GM12878 (cell line): ENCODE measurements at regions of chr13 and their contacts with region 1.

Region 1: GRCh38 chr13:103188713-103189326 is 122.6 kb upstream of the SLC10A2 start:
- DNase-seq: no peak
- ATAC-seq: peak; percentile 64
- H3K4me3 ChIP-seq: no peak overlapping the region
- H3K27ac ChIP-seq: no peak overlapping the region
- H3K4me1 ChIP-seq: peaks cover 5% of the 10 kb centered on the region
- H3K27me3 ChIP-seq: no peaks in the 10 kb centered on the region
- CTCF ChIP-seq: peak; percentile 34 to 71 (median 53); a peak in 5 of 6 replicates
- EP300 ChIP-seq: no peak
- POLR2A ChIP-seq: no peak
- RAD21 ChIP-seq: peak; percentile 77

Region 2: GRCh38 chr13:103087275-103087674 is 101.5 kb before region 1 on chr13:
- CTCF ChIA-PET with region 1: no interaction called
- POLR2A ChIA-PET with region 1: no interaction called
- RAD21 ChIA-PET with region 1: no interaction called
- SMC1A ChIA-PET with region 1: no interaction called
- in situ Hi-C with region 1: no loop called
- intact Hi-C with region 1: no loop called
- DNase-seq: no peak
- ATAC-seq: no peak
- H3K4me3 ChIP-seq: no peak overlapping the region
- H3K27ac ChIP-seq: no peak overlapping the region
- H3K4me1 ChIP-seq: no peaks in the 10 kb centered on the region
- H3K27me3 ChIP-seq: no peaks in the 10 kb centered on the region
- CTCF ChIP-seq: no peak
- EP300 ChIP-seq: no peak
- POLR2A ChIP-seq: no peak
- RAD21 ChIP-seq: no peak

Region 3: GRCh38 chr13:103236213-103236612 is 47.4 kb after region 1 on chr13:
- CTCF ChIA-PET with region 1: no interaction called
- POLR2A ChIA-PET with region 1: no interaction called
- RAD21 ChIA-PET with region 1: no interaction called
- SMC1A ChIA-PET with region 1: no interaction called
- in situ Hi-C with region 1: no loop called
- intact Hi-C with region 1: no loop called
- DNase-seq: no peak
- ATAC-seq: no peak
- H3K4me3 ChIP-seq: no peak overlapping the region
- H3K27ac ChIP-seq: no peak overlapping the region
- H3K4me1 ChIP-seq: no peaks in the 10 kb centered on the region
- H3K27me3 ChIP-seq: no peaks in the 10 kb centered on the region
- CTCF ChIP-seq: 0 out of 6 replicates have a peak, but pooled peaks of 1 of the 3 experiments have one; percentile 16
- EP300 ChIP-seq: no peak
- POLR2A ChIP-seq: no peak
- RAD21 ChIP-seq: peak; percentile 22; the same call in 1 of the 2 replicates

Region 4: GRCh38 chr13:103324641-103325040 is 135.8 kb after region 1 on chr13:
- CTCF ChIA-PET with region 1: no interaction called
- POLR2A ChIA-PET with region 1: no interaction called
- RAD21 ChIA-PET with region 1: no interaction called
- SMC1A ChIA-PET with region 1: interaction called, 10 read pairs
- in situ Hi-C with region 1: no loop called
- intact Hi-C with region 1: no loop called
- DNase-seq: no peak
- ATAC-seq: no peak
- H3K4me3 ChIP-seq: no peak overlapping the region
- H3K27ac ChIP-seq: no peak overlapping the region
- H3K4me1 ChIP-seq: no peaks in the 10 kb centered on the region
- H3K27me3 ChIP-seq: no peaks in the 10 kb centered on the region
- CTCF ChIP-seq: no peak
- EP300 ChIP-seq: no peak
- POLR2A ChIP-seq: no peak
- RAD21 ChIP-seq: no peak

Region 5: GRCh38 chr13:103371271-103371670 is 182.5 kb after region 1 on chr13:
- CTCF ChIA-PET with region 1: no interaction called
- POLR2A ChIA-PET with region 1: no interaction called
- RAD21 ChIA-PET with region 1: no interaction called
- SMC1A ChIA-PET with region 1: no interaction called
- in situ Hi-C with region 1: no loop called
- intact Hi-C with region 1: no loop called
- DNase-seq: no peak
- ATAC-seq: no peak
- H3K4me3 ChIP-seq: no peak overlapping the region
- H3K27ac ChIP-seq: no peak overlapping the region
- H3K4me1 ChIP-seq: no peaks in the 10 kb centered on the region
- H3K27me3 ChIP-seq: no peaks in the 10 kb centered on the region
- CTCF ChIP-seq: no peak
- EP300 ChIP-seq: no peak
- POLR2A ChIP-seq: no peak
- RAD21 ChIP-seq: no peak

Region 6: GRCh38 chr13:103517066-103517767 is 328.4 kb after region 1 on chr13:
- CTCF ChIA-PET with region 1: no interaction called
- POLR2A ChIA-PET with region 1: no interaction called
- RAD21 ChIA-PET with region 1: no interaction called
- SMC1A ChIA-PET with region 1: interaction called, 4 read pairs
- in situ Hi-C with region 1: no loop called
- intact Hi-C with region 1: loop called (anchors 5 kb)
- DNase-seq: peak; percentile 57
- ATAC-seq: peak; percentile 85
- H3K4me3 ChIP-seq: no peak overlapping the region
- H3K27ac ChIP-seq: no peak overlapping the region
- H3K4me1 ChIP-seq: no peaks in the 10 kb centered on the region
- H3K27me3 ChIP-seq: no peaks in the 10 kb centered on the region
- CTCF ChIP-seq: no peak
- EP300 ChIP-seq: 0 out of 4 replicates have a peak, but pooled peaks of 1 of the 2 experiments have one; percentile 54
- POLR2A ChIP-seq: no peak
- RAD21 ChIP-seq: no peak

Region 7: GRCh38 chr13:103788061-103788652 is 599.3 kb after region 1 on chr13:
- CTCF ChIA-PET with region 1: interaction called, 9 read pairs
- POLR2A ChIA-PET with region 1: no interaction called
- RAD21 ChIA-PET with region 1: no interaction called
- SMC1A ChIA-PET with region 1: interaction called, 7 read pairs
- in situ Hi-C with region 1: no loop called
- intact Hi-C with region 1: loop called (anchors 10 kb)
- DNase-seq: no peak
- ATAC-seq: peak; percentile 34; the same call in 1 of the 3 replicates
- H3K4me3 ChIP-seq: no peak overlapping the region
- H3K27ac ChIP-seq: no peak overlapping the region
- H3K4me1 ChIP-seq: no peaks in the 10 kb centered on the region
- H3K27me3 ChIP-seq: no peaks in the 10 kb centered on the region
- CTCF ChIP-seq: peak in 2 of 3 experiments; percentile 5 to 15; a peak in 2 of 6 replicates
- EP300 ChIP-seq: no peak
- POLR2A ChIP-seq: no peak
- RAD21 ChIP-seq: peak; percentile 20; the same call in 1 of the 2 replicates

Region 8: GRCh38 chr13:104773775-104774174 is 1585.0 kb after region 1 on chr13:
- CTCF ChIA-PET with region 1: interaction called, 3 read pairs
- POLR2A ChIA-PET with region 1: no interaction called
- RAD21 ChIA-PET with region 1: interaction called, 3 read pairs
- SMC1A ChIA-PET with region 1: interaction called, 3 read pairs
- in situ Hi-C with region 1: loop called (anchors 25 kb)
- intact Hi-C with region 1: loop called (anchors 5 kb)
- DNase-seq: peak; percentile 4
- ATAC-seq: peak; percentile 72
- H3K4me3 ChIP-seq: no peak overlapping the region
- H3K27ac ChIP-seq: no peak overlapping the region
- H3K4me1 ChIP-seq: no peaks in the 10 kb centered on the region
- H3K27me3 ChIP-seq: no peaks in the 10 kb centered on the region
- CTCF ChIP-seq: peak; percentile 57 to 70 (median 65); a peak in 5 of 6 replicates
- EP300 ChIP-seq: no peak
- POLR2A ChIP-seq: no peak
- RAD21 ChIP-seq: peak; percentile 85

Region 9: DNA sequence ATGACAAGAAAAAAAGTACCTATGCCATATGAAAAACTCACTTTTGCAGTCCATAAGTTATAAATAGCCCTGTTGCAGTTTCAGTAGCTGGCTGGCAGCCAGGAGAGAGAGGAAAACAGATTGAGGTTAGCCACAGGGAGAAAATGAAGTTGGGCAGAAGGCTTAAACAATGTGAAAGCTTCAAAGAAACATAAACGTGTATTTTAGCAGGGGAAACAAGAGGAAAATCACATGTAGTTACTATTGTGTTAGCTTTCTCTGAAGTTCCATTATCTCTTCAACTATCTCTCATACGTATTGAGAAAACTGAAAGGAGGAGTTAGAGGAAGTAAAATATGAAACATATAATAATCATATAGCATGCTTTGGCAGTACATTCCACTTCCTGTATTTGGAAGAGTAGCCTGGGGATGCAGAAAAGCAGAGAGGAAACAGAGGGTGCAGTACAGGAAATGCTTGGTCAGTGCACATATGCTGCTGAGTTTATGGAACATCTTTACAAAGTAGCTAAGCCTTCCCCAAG is 1795.5 kb after region 1 on chr13:
- CTCF ChIA-PET with region 1: no interaction called
- POLR2A ChIA-PET with region 1: no interaction called
- RAD21 ChIA-PET with region 1: no interaction called
- SMC1A ChIA-PET with region 1: no interaction called
- in situ Hi-C with region 1: no loop called
- intact Hi-C with region 1: loop called (anchors 10 kb)
- DNase-seq: peak; percentile 92
- ATAC-seq: peak; percentile 87
- H3K4me3 ChIP-seq: peak overlapping the region; percentile 15; the same call in 1 of the 2 replicates
- H3K27ac ChIP-seq: peak overlapping the region; percentile 77
- H3K4me1 ChIP-seq: peaks cover 24% of the 10 kb centered on the region
- H3K27me3 ChIP-seq: no peaks in the 10 kb centered on the region
- CTCF ChIP-seq: no peak
- EP300 ChIP-seq: peak in 1 of 2 experiments; percentile 49; a peak in 1 of 4 replicates
- POLR2A ChIP-seq: no peak
- RAD21 ChIP-seq: no peak